Stomach (tissue), 19 donors: ENCODE measurements at regions of chr17 and their contacts with region 1.

Region 1: DNA sequence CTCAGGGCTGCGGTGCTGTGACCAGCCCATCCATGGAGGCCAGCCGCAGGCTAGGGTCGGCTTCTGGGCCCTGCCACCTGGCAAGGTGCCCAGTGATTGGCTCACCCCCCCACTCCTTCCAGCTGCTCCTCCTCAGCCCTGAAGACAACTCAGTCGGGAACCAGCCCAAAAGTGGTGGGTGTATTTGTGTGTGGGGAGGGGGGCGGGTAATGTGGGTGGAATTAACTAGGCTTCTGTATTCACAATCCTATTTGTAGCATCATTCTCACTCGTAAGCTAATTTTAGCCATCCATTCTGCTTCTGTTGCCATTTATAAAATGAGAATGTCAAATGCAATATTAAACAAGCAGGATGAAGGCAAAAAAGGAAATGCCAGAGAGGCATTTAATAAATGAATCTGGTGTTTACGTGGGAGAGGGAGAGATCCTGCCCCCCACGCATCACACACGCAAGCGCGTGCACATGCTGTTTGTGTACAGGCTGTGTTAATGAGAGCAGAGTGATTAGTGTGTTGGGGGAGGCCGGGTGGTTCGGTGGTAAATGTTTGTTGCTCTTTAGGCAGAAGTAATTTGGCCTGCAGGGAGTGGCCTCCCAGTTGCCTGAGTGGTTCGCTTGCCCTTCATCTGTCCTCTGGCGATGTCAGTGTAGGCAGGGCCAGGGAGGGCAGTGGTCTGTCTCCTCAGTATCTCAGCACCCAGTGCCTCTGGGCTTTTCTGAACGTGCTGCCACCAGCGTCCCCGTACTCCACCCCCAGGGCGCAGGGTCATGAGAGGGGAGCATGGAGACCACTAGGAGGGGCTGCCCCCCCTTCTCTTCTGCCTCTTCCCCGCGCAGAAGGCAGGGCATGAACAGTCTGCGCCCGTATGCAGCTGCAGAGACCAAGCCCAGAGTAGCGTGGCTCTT is 140.1 kb downstream of the CCDC182 start:
- DNase-seq: peak in 1 of 2 donors; percentile 79
- H3K4me3 ChIP-seq: peak overlapping the region in 3 of 4 donors; percentile 9 to 28 (median 27)
- H3K27ac ChIP-seq: peak overlapping the region; percentile 49 to 75 (median 66)
- H3K4me1 ChIP-seq: peaks cover 34 to 45% (median 41%) of the 10 kb centered on the region in 4 donors
- H3K27me3 ChIP-seq: no peaks in the 10 kb centered on the region
- CTCF ChIP-seq: no peak
- EP300 ChIP-seq: no peak
- POLR2A ChIP-seq: no peak

Region 2: GRCh38 chr17:57665128-57665527 is 60.1 kb after region 1 on chr17:
- intact Hi-C with region 1: loop called (anchors 5 kb)
- DNase-seq: no peak
- H3K4me3 ChIP-seq: no peak overlapping the region
- H3K27ac ChIP-seq: peak overlapping the region in 4 of 5 donors; percentile 16 to 88 (median 58)
- H3K4me1 ChIP-seq: peaks cover 7 to 43% (median 24%) of the 10 kb centered on the region in 4 donors
- H3K27me3 ChIP-seq: no peaks in the 10 kb centered on the region
- CTCF ChIP-seq: no peak
- EP300 ChIP-seq: no peak
- POLR2A ChIP-seq: no peak